ENCODE measurements at regions of chr14 and their contacts with region 1.

Region 1: GRCh38 chr14:103343905-103344797 is 10.1 kb downstream of the EIF5 start:
- DNase-seq: no peak
- ATAC-seq: no peak

Region 2: DNA sequence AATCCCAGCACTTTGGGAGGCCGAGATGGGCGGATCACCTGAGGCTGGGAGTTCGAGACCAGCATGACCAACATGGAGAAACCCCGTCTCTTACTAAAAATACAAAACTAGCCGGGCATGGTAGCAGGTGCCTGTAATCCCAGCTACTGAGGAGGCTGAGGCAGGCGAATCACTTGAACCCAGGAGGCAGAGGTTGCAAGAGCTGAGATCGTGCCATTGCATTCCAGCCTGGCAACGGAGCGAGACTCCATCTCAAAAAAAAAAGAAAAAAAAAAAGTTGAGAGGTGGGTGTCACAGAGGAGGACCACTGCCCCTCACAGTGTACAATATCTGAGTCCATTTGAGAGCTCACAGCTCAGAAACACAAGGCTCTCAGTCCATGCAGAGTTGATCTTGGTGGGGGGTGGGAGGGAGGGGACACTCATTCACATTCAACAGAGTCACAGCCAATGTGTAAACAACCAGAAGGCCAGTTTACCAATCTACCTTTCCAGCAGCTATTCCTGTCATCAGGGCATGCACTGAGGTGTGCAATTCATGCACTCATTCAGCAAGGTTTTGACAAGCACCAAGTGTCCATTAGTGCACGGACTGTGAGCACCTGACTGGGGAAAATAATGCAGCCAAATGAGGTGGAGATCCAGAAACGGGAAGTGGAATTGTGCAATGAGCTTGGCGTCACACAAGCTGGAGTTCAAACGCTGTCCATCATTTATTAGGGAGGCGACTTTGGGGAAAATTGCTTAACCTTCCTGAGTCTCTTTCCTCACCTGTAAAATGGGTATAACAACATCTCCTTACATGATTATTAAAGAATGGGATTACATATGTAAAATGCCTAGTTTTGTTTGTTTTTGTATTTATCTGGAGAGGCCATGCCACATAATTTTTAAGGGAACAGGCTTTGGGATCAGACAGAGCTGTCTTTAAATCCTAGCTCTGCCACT is 14.5 kb before region 1 on chr14:
- intact Hi-C with region 1: no loop called
- DNase-seq: no peak
- ATAC-seq: no peak

Region 3: GRCh38 chr14:103476065-103476464 is 131.9 kb after region 1 on chr14:
- intact Hi-C with region 1: loop called (anchors 5 kb)
- DNase-seq: no peak
- ATAC-seq: no peak